Transverse colon (tissue), 4 donors: ENCODE measurements at regions of chr12 and their contacts with region 1.

Region 1: DNA sequence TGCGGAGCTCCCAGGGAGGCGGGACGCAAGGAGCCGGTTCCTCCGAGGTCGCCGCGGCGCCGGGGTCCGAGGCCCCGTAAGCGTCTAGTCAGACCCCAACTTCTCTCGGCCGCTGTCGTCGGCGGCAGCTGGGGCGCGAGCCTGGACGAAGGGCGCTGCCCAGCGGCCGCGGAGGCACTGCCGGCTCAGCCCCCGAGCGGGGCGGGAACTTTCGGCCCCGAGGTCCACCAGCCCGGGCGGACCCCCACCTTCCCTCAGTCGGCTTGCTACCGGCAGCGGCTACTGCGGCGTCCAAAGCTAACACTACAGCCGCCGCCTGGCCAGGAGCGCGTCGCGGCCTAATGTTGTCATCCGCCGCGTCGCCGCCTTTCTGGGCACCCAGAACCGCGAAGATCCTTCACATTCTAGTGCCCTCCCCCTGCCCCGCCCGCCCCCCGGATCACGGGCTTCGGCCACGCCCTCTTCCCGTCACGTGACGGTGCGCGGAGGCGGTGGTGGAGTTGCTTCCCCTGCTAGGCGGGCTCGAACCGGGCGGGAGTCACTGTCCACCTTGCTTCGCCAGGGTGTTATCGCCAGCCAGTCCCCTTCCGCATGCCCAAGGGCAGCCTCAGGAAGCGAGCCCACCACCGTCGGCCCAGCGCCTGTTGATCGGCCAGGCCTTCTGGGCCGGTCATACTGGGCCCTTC is at the start of gene OSBPL8:
- DNase-seq: peak; percentile 97
- H3K4me3 ChIP-seq: peak within 1 kb of the TSS; percentile 73 to 87 (median 84)
- H3K27ac ChIP-seq: peak within 1 kb of the TSS; percentile 91 to 94 (median 92)
- H3K4me1 ChIP-seq: peaks cover 4 to 40% (median 13%) of the 10 kb centered on the region in 4 donors
- H3K27me3 ChIP-seq: peaks cover 2% of the 10 kb centered on the region
- CTCF ChIP-seq: peak in 3 of 5 experiments; percentile 19 to 35 (median 26)
- EP300 ChIP-seq: no peak
- POLR2A ChIP-seq: peak; percentile 77
- total RNA-seq, gene OSBPL8: 15.5 to 241 (median 29.4) TPM

Region 2: GRCh38 chr12:76083904-76084862 is 475.4 kb before region 1 on chr12 and contains the start of gene NAP1L1:
- in situ Hi-C with region 1: loop called in 2 of 4 experiments (anchors 25 kb)
- intact Hi-C with region 1: no loop called
- DNase-seq: peak; percentile 97
- H3K4me3 ChIP-seq: peak within 1 kb of the TSS; percentile 74 to 97 (median 84)
- H3K27ac ChIP-seq: peak within 1 kb of the TSS; percentile 97 to 99 (median 98)
- H3K4me1 ChIP-seq: peaks cover 0 to 33% (median 19%) of the 10 kb centered on the region in 4 donors
- H3K27me3 ChIP-seq: no peaks in the 10 kb centered on the region
- CTCF ChIP-seq: no peak
- EP300 ChIP-seq: no peak
- POLR2A ChIP-seq: peak; percentile 89
- total RNA-seq, gene NAP1L1: 78.9 to 191 (median 150) TPM

Region 3: DNA sequence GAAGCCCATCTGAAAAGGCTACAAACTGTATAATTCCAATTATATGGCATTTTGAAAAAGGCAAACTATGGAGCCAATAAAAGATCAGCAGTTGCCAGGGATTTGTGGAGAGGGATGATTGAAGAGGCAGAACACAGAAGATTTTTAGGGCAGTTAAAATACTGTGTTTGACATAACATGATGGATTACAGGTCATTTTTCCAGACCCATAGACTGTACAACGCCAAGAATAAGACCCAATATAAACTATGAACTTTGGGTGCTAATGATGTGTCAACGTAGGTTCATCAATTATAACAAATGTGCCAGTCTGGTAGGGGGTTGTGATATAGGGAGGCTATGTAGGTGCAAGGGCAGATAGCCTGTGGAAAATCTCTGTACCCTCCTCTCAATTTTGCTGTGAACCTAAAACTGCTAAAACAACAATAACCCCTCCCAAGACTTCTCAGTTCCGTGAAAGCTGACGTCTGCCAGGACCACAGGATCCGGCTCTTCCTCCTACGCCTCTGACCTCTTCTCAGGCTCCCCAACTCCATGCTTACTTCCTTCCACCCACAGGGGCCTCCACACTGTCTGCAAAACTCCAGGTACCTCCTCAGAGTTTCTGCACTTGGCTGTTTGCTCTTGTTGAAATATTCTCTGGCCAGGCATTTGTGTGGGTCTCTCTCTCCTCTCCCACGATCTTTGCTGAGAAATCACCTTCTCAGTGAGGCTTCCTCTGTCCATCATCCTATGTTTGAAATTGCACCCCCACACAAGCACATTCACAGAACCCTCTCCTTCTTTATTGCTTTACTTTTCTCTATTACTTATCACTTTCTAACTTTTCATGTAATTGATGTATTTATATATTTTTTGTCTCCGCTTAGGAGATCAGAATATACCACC is 342.7 kb before region 1 on chr12:
- in situ Hi-C with region 1: no loop called
- intact Hi-C with region 1: no loop called
- DNase-seq: no peak
- H3K4me3 ChIP-seq: no peak overlapping the region
- H3K27ac ChIP-seq: no peak overlapping the region
- H3K4me1 ChIP-seq: no peaks in the 10 kb centered on the region
- H3K27me3 ChIP-seq: no peaks in the 10 kb centered on the region
- CTCF ChIP-seq: no peak
- EP300 ChIP-seq: no peak
- POLR2A ChIP-seq: no peak

Region 4: DNA sequence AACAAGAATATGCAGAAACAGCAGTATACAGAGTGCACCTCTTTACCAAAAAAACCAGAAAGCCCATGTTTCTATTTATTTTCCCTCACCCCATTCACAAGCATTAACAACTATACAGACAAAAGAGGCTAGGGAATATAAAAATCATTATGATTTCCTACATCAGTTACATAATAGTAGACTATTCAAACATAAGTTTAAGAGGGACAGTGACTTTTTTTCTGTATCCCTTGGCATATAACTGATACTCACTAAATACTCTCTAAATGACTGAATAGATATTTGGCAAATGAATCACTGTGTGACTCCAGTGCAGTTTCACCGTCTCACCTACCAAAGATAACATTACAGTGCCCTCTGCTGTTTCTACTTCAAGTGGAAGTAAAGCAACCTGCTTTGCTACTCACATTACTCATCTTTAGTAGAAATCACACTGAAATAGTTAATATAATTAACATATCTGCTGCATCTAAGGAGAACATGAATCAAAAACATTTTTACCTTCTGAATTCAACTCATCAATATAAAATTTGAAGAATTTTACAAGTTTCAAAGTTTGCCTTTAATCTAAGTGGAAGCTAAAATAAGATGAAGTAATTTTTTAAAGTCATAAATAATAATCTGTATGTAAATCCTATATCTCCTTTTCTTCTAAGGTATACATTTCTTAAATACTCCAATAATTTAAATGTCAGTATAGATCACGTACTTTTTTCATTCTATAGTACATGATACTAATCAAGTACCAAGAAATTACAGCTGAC is 103.8 kb before region 1 on chr12:
- in situ Hi-C with region 1: loop called in 1 of 4 experiments (anchors 25 kb)
- intact Hi-C with region 1: no loop called
- DNase-seq: no peak
- H3K4me3 ChIP-seq: no peak overlapping the region
- H3K27ac ChIP-seq: no peak overlapping the region
- H3K4me1 ChIP-seq: peaks cover 0 to 2% (median under 1%) of the 10 kb centered on the region in 4 donors
- H3K27me3 ChIP-seq: no peaks in the 10 kb centered on the region
- CTCF ChIP-seq: peak; percentile 37 to 44 (median 41)
- EP300 ChIP-seq: no peak
- POLR2A ChIP-seq: no peak

Region 5: DNA sequence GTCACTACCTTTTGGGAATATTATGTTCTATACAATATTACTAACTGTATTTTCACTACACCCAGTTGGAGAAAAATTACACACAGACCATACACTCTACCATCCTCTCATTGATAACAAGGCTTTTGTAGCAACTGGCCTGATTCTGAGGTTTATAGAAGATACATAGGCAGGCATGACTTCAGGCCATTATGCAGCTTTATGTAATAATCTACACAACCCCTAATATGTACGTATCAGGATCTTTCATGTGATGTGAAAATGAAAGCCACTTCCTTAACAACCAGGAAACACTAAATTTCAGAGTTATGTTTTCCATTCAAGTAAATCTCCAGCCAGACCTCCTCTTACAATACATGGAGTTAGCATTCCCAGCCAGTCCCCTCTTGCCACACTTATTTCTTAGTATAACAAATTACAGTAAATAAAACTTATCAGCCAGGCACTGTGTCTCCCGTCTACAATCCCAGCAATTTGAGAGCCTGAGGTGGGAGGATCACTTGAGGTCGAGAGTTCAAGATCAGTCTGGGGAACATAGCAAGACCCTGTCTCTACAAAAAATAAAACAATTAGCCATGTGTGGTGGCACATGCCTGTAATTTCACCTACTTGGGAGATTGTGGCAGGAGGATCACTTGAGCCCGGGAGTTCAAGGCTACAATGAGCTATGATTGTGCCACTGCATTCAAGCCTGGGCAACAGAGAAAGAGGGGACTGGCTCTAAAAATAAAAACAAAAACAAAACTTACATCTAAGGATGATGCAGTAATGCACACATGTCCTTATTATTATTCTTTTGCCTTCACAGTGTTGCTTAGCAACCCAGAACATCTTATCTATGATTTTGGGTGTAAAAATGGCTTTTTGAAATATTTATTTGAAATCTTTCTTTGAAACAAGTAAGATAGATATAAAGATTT is 10.4 kb after region 1 on chr12:
- in situ Hi-C with region 1: no loop called
- intact Hi-C with region 1: loop called (anchors 1 kb)
- DNase-seq: no peak
- H3K4me3 ChIP-seq: no peak overlapping the region
- H3K27ac ChIP-seq: no peak overlapping the region
- H3K4me1 ChIP-seq: no peaks in the 10 kb centered on the region
- H3K27me3 ChIP-seq: no peaks in the 10 kb centered on the region
- CTCF ChIP-seq: no peak
- EP300 ChIP-seq: no peak
- POLR2A ChIP-seq: no peak